PC-3 (cell line): ENCODE measurements at regions of chr1 and their contacts with region 1.

Region 1: DNA sequence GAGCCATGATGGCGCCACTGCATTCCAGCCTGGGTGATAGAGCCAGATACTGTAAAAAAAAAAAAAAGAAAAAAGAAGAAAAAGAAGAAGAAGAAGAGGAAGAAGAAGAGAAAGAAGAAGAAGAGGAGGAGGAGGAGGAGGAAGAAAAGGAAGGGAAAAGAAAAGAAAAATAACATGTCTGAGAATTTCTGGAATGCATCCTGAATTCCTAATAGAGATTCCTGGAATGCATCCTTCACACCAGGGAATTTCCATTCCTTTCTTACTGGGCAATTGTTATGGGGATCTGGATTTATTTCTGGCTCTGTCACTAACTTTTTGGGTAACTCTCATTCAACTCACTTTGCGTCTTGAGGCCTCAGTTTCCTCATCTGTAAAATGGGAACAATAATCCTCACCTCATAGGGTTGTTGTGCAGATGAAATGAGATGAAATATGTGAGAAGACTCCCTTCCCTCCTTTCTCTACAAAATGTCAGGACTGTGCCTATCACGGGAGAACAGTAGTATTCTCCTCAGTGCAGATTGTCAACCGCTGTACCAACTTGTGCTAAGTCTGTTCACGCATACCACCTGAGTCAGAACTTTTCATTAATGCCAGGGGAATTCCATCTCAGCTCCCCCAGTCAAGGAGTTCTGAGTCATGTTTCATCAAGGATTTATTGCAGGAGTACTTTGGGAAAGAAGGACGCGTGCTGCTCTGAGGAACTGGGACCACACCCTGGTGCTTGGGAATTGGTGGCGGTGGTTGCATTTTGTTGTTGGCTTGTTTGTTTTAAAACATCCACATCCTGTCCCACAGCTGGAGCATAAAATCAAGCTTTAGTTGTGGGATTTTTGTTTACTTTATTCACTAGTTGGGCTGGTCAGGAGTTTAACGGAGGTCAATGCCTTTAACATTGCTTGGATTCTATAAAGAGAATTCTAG is 42.4 kb upstream of the ROR1 start:
- DNase-seq: peak; percentile 99
- ATAC-seq: peak; percentile 87
- H3K4me3 ChIP-seq: peak overlapping the region; percentile 15; the same call in 1 of the 2 replicates
- H3K27ac ChIP-seq: peak overlapping the region; percentile 96
- H3K4me1 ChIP-seq: peaks cover 36% of the 10 kb centered on the region
- H3K27me3 ChIP-seq: no peaks in the 10 kb centered on the region
- CTCF ChIP-seq: no peak

Region 2: DNA sequence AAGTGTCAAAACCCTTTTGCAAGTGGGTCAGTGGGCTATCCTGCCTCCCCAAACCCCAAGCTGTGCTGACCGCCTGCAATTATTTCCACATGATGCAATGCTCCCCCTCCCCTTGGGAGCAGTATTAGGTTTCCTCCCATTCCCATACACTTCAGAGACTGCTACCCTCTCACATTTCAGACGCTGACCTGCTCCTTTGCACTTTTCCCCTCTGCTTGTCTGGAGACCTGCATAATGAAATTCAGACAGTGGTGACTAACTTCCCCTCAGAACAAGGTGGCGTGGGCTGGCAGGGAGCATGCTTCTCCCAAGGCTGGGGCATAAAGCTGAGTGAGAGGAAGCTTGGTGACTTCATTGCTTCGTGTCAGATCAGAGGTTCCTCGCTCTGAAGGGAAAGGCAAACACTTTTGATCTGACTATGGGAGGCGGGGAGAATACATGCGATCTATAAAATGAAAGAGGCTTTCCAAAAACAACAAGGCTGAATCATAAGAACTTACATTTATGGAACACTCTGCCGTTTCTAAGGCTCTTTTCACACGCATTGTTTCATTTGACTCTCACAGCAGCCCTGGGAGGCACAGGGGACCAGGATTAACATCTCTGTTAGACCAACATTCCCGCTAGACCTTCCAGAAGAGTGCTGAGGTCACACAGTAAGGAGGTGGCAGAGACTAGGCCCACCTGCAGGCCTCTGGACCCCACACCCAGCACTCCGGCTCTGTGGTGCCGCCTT is 14.9 kb after region 1 on chr1:
- CTCF ChIA-PET with region 1: no interaction called
- POLR2A ChIA-PET with region 1: no interaction called
- intact Hi-C with region 1: loop called (anchors 1 kb)
- DNase-seq: peak; percentile 93
- ATAC-seq: peak; percentile 96
- H3K4me3 ChIP-seq: peak overlapping the region; percentile 31; the same call in 1 of the 2 replicates
- H3K27ac ChIP-seq: peak overlapping the region; percentile 100
- H3K4me1 ChIP-seq: peaks cover 25% of the 10 kb centered on the region
- H3K27me3 ChIP-seq: no peaks in the 10 kb centered on the region
- CTCF ChIP-seq: no peak